ENCODE measurements at regions of chr4 and their contacts with region 1.

Region 1: DNA sequence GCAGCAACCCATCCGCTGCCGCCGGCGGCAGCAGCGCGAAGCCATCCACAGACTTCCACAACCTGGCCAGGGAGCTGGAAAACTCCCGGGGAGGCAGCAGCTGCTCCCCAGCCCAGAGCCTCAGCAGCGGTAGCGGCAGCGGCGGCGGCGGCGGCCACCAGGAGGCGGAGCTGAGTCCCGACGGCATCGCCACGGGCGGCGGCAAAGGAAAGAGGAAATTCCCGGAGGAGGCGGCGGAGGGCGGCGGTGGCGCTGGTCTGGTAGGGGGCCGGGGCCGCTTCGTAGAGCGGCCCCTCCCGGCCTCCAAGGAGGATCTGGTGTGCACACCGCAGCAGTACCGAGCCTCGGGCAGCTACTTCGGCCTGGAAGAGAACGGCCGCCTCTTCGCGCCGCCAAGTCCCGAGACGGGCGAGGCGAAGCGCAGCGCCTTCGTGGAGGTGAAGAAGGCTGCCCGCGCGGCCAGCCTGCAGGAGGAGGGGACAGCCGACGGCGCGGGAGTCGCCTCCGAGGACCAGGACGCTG is 4.9 kb downstream of the PRDM8 start:
- DNase-seq: peak in 1 of 2 experiments; percentile 94
- H3K4me3 ChIP-seq: peak overlapping the region; percentile 4 to 55 (median 18); a peak in 5 of 8 replicates
- H3K27ac ChIP-seq: no peak overlapping the region
- H3K4me1 ChIP-seq: peaks cover 4 to 15% (median 7%) of the 10 kb centered on the region in 4 experiments
- H3K27me3 ChIP-seq: peaks cover 86 to 100% (median 93%) of the 10 kb centered on the region in 4 experiments
- CTCF ChIP-seq: peak in 2 of 3 experiments; percentile 69; a peak in 3 of 4 replicates
- EP300 ChIP-seq: peak in 1 of 2 experiments; percentile 61; a peak in 1 of 3 replicates
- POLR2A ChIP-seq: no peak
- RAD21 ChIP-seq: peak; percentile 31 to 43; a peak in 2 of 4 replicates

Region 2: DNA sequence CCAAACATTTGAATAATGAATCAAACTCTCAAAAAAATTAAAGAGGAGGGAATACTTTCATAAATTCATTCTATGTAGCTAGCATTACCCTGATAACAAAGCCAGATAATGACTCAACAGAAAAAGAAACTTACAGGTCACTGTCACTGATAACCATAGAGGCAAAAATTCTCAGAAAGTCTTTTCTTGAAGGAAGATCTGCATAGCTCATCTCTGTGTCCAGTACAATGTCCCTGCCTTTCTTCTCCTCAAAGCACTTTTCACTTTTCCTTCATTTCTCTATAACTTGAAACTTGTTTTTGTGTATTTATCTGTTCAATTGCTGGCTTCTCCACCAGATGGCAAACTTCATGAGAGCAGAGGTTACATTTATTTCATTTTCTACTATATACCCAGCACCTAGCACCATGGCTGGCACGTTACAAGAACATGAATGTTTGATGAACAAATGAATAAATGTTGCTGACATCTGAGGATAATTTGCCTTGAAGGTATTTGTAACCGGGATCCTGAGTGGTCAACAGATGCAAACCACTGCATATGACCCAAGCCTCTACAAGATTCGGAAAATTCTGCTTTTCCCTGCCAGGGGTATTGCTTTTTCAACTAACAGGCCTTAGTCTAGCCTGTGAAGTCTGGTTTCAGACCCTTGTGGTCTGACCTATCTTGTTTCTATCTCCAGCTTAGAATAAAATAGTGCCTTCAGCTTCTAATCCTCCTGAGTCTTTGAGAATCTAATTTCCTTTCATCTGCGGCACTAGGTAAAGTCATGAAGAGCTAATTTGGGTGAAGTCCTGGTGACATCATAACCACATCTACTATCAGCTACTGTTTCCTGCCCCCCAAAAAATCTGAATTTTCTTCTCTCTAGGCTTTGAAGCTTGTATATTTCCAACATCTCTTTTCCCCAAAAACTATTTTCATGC is 76.7 kb before region 1 on chr4:
- CTCF ChIA-PET with region 1: no interaction called
- POLR2A ChIA-PET with region 1: no interaction called
- DNase-seq: no peak
- H3K4me3 ChIP-seq: no peak overlapping the region
- H3K27ac ChIP-seq: no peak overlapping the region
- H3K4me1 ChIP-seq: no peaks in the 10 kb centered on the region
- H3K27me3 ChIP-seq: no peaks in the 10 kb centered on the region
- CTCF ChIP-seq: peak in 2 of 3 experiments; percentile 26 to 54; a peak in 2 of 4 replicates
- EP300 ChIP-seq: no peak
- POLR2A ChIP-seq: no peak
- RAD21 ChIP-seq: peak; percentile 35 to 37; a peak in 3 of 4 replicates

Region 3: GRCh38 chr4:80184053-80184790 is 18.0 kb before region 1 on chr4:
- CTCF ChIA-PET with region 1: interaction called, 170 read pairs
- POLR2A ChIA-PET with region 1: interaction called, 5 read pairs
- DNase-seq: peak in 1 of 2 experiments; percentile 99
- H3K4me3 ChIP-seq: peak overlapping the region; percentile 42 to 86 (median 56)
- H3K27ac ChIP-seq: no peak overlapping the region
- H3K4me1 ChIP-seq: peaks cover 0 to 19% (median 14%) of the 10 kb centered on the region in 4 experiments; a peak in 6 of 7 replicates
- H3K27me3 ChIP-seq: peaks cover 64 to 83% (median 74%) of the 10 kb centered on the region in 4 experiments
- CTCF ChIP-seq: peak; percentile 74 to 98 (median 89)
- EP300 ChIP-seq: no peak
- POLR2A ChIP-seq: no peak
- RAD21 ChIP-seq: peak; percentile 71 to 80

Region 4: DNA sequence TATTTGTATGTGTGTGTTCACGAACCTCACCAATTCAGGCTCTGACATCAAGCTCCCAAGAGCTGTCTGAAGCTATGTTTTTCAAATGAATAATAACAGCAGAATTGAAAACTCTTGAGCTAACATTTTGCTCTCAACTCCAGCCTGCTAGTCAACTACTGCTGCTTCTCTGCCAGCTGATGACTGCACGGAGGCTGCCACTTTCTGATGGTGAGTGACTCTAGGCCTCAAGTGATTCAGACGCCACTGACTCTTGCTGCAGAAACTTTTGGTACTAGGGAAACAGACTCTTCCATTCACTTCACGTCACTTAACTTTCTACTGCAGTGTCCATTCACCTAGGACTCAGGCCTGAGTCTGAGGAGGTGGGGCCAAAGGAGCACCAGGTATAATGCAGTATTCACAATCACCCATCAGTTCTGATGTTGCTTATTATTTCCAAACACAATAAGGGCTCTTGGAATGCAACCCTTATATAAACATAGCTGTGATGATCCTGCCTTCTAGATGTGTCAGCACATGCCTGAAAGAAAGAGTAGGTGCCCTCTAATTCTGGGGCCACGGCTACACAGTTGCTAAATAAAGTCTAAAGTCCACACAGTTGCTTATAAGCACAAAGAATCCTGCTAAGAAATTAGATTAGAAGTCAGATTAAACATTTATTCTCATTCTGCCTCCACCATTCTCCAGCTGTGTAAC is 11.0 kb after region 1 on chr4:
- CTCF ChIA-PET with region 1: interaction called, 22 read pairs
- POLR2A ChIA-PET with region 1: no interaction called
- DNase-seq: no peak
- H3K4me3 ChIP-seq: no peak overlapping the region
- H3K27ac ChIP-seq: no peak overlapping the region
- H3K4me1 ChIP-seq: no peaks in the 10 kb centered on the region
- H3K27me3 ChIP-seq: peaks cover 5 to 24% (median 19%) of the 10 kb centered on the region in 4 experiments
- CTCF ChIP-seq: no peak
- EP300 ChIP-seq: no peak
- POLR2A ChIP-seq: no peak
- RAD21 ChIP-seq: no peak

Region 5: DNA sequence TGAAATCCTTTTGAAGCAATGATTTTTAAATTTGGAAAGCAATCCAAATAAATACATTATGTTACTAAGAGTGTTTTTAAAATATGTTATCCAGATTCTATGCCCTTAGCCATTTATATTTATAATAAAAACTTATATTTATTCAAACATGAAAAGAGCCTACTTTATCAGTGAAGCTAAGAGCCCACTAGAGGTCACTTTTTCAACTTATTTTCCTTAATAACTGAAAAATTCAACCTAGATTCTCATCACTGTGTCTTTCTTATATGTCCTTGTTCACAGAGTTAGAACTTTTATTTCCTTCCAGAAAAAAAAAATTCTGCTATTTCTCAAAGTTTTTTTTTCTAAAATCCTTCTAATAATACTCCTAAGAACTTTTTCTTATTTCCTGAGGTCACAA is 18.9 kb after region 1 on chr4:
- CTCF ChIA-PET with region 1: interaction called, 11 read pairs
- POLR2A ChIA-PET with region 1: no interaction called
- DNase-seq: no peak
- H3K4me3 ChIP-seq: no peak overlapping the region
- H3K27ac ChIP-seq: no peak overlapping the region
- H3K4me1 ChIP-seq: no peaks in the 10 kb centered on the region
- H3K27me3 ChIP-seq: 0 out of 7 replicates have a peak, but pooled peaks cover 0 to 4% (median 0%) of the 10 kb centered on the region in 4 experiments
- CTCF ChIP-seq: no peak
- EP300 ChIP-seq: no peak
- POLR2A ChIP-seq: no peak
- RAD21 ChIP-seq: no peak